Tibial artery (tissue), 4 donors: ENCODE measurements at regions of chr2 and their contacts with region 1.

Region 1: DNA sequence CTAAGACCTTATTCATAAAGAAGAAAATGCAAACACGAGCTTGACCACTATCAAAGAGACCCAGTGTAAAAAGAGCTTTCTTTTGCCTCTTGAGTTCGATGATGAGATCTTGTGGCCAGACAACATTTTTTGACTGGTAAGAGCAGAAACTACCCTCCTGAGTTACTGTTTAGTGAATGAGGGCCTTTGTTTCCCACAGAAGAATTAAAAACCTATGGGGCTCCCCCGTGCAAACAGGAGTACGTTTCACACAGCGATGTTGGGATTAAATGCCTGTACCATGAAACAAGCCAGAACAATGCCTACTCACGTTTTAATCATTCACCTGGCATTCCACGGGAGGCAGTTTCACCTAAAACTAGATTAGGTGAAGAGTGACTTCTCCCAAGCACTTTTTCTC is 36.0 kb downstream of the MYCN start:
- DNase-seq: no peak
- H3K4me3 ChIP-seq: no peak overlapping the region
- H3K27ac ChIP-seq: no peak overlapping the region
- H3K4me1 ChIP-seq: no peaks in the 10 kb centered on the region
- H3K27me3 ChIP-seq: peaks cover 0 to 3% of the 10 kb centered on the region in 2 donors
- CTCF ChIP-seq: no peak

Region 2: DNA sequence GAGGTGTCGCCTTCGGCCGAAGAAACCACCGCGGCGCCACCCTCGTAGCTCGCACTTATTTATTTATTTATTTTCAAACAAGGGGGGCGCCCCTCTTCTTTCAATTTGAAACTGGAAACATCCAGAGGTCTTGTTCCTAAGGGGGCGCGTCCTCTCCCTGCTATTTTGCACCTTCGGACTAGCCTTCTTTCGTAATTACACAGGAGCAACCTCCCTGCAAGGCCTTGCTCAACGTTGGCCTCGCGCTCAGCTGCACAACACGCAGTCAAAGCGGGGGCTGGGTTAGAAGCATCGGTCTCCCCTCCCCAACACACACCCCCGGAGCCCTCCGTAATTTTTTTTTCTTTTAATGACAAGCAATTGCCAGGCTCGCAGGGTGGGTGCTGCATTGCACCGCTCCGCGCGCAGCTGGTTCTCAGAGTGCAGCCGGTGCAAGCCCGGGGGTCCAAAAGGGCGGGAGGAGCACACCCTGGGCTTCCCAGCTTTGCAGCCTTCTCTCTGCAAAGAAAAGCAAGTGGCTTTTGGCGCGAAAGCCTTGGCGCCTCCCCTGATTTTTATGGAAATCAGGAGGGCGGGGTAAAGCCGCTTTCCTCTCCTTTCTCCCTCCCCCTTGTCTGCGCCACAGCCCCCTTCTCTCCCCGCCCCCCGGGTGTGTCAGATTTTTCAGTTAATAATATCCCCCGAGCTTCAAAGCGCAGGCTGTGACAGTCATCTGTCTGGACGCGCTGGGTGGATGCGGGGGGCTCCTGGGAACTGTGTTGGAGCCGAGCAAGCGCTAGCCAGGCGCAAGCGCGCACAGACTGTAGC is 36.3 kb before region 1 on chr2 and contains the start of gene MYCN:
- intact Hi-C with region 1: loop called (anchors 2 kb)
- DNase-seq: peak in 1 of 2 donors; percentile 27
- H3K4me3 ChIP-seq: peak within 1 kb of the TSS; percentile 34 to 52
- H3K27ac ChIP-seq: no peak within 1 kb of the TSS
- H3K4me1 ChIP-seq: peaks cover 0 to 36% (median 31%) of the 10 kb centered on the region in 4 donors
- H3K27me3 ChIP-seq: peaks cover 0 to 65% of the 10 kb centered on the region in 2 donors
- CTCF ChIP-seq: peak in 1 of 2 experiments; percentile 51